ENCODE measurements at regions of chr17 and their contacts with region 1.

Region 1: DNA sequence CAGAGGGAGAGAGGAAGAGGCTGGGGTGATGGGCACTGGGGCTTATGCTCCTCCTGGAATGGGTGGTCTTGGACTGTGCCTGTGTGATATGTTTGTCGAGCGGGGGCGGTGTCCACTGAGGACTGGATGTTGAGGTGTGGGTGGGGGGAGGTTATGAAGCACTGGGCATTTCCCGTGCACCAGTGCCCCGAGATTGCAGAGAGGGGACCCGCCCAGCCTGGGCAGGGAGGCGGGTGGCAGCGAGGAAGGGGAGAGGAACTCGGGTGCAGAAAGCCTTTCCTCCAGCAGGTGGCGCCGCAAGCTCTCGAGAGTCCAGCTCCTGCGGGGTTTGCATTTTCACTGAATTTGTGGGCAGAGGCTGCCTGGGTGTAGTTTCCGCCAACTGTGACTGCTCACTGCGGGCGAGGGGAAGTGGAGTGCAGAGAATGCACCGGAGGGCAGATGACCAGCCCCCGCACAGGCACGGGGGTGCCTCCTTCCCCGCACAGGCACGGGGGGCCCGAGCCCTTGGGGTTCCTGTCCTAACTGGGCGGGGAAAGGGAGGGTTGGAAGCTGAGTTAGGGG is 190.6 kb downstream of the SEC14L1 start:
- DNase-seq: peak; percentile 87 to 98 (median 93)
- ATAC-seq: peak; percentile 95
- H3K4me3 ChIP-seq: peak overlapping the region in 1 of 2 donors; percentile 18
- H3K27ac ChIP-seq: peak overlapping the region; percentile 67 to 74
- H3K4me1 ChIP-seq: peaks cover 12 to 61% of the 10 kb centered on the region in 2 donors
- H3K27me3 ChIP-seq: no peaks in the 10 kb centered on the region
- CTCF ChIP-seq: peak; percentile 95 to 98

Region 2: DNA sequence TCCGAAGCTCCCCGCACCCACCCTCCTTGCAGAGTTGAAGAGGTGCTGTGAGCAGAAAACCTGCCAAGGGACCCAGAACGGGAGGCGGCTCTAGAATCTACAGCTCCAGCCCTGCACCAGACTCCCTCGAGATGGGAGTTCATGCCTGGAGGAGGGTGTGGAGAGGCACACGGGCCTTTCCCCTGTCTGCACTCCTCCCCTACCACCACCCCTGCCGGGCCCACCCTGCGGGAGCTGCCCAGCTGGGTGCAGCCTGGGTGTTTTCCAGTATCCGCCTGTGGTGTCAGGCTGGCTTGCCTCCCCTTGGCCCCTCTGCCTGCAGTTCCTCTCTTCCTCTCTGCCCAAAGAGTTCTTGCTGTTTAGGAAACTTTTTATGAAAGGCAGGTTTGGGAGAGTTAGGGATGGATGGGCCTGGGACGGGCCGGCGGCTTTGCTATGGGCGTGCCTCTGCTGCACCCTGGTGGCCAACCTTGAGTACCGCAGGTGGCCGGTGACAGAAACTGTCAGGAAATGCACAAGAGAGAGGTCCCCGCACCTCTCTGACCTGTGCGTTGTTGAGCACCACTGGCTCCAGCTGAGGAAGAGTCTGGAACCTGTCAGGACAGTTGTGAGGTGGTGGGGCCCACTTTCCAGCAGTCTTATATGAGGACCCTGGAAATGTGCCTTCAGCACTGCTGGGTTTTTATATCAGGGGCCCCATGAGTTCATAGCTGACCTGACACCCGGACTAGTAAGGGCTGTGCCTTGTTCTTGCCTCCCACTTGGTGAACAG is 163.5 kb after region 1 on chr17:
- intact Hi-C with region 1: loop called in 1 of 2 experiments (anchors 5 kb)
- DNase-seq: peak; percentile 73 to 91 (median 83)
- ATAC-seq: peak; percentile 90
- H3K4me3 ChIP-seq: no peak overlapping the region
- H3K27ac ChIP-seq: no peak overlapping the region
- H3K4me1 ChIP-seq: peaks cover 0 to 32% of the 10 kb centered on the region in 2 donors
- H3K27me3 ChIP-seq: no peaks in the 10 kb centered on the region
- CTCF ChIP-seq: peak; percentile 92 to 96